Caco-2 (cell line): ENCODE measurements at regions of chr1 and their contacts with region 1.

Region 1: GRCh38 chr1:203702130-203702577 is 62.8 kb upstream of the LAX1 start:
- DNase-seq: peak; percentile 48 to 68
- H3K4me3 ChIP-seq: no peak overlapping the region
- H3K4me3 Mint-ChIP-seq: no peak overlapping the region
- H3K27ac Mint-ChIP-seq: no peak overlapping the region
- H3K4me1 ChIP-seq: no peaks in the 10 kb centered on the region
- H3K4me1 Mint-ChIP-seq: peaks cover 6% of the 10 kb centered on the region
- H3K27me3 ChIP-seq: no peaks in the 10 kb centered on the region
- H3K27me3 Mint-ChIP-seq: no peaks in the 10 kb centered on the region
- CTCF ChIP-seq: peak; percentile 74 to 93

Region 2: DNA sequence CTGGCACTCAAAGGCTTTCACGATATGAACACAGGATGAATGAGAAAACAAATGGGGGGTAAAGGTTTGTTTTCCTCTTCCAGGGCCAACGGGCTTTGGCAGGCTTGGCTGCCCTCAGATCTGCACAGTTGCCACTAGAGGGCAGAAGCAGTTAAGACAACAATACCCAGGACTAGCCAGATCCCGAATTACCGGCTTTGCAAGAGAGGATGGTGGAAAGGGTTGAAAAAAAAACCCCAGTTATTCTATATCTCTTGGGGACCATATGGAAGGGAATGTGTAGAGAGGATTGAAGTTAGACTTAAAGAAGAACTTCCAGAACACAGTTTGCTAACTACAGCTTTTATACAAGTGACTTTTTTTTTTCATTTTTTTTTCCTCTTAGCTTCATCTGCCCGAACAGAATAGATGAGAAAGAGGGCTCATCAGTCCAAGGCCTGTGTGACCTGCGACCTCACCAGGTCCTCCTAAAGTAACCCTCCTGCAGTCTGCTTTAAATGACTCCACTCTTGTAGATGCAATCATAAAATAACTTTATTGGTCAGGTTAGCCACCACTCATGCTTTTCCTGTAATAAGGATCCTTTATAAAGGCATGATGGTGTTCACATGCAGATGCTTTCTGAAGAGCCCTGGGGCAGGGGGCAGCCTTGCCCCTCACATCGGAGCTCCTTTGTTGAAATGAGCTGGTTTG is 361.9 kb before region 1 on chr1:
- CTCF ChIA-PET with region 1: interaction called, 5 read pairs
- POLR2A ChIA-PET with region 1: no interaction called
- intact Hi-C with region 1: loop called (anchors 2 kb)
- DNase-seq: peak; percentile 81 to 83
- H3K4me3 ChIP-seq: no peak overlapping the region
- H3K4me3 Mint-ChIP-seq: no peak overlapping the region
- H3K27ac Mint-ChIP-seq: no peak overlapping the region
- H3K4me1 ChIP-seq: peaks cover 5% of the 10 kb centered on the region; the same call in 1 of the 2 replicates
- H3K4me1 Mint-ChIP-seq: peaks cover 6% of the 10 kb centered on the region
- H3K27me3 ChIP-seq: no peaks in the 10 kb centered on the region
- H3K27me3 Mint-ChIP-seq: no peaks in the 10 kb centered on the region
- CTCF ChIP-seq: peak; percentile 90

Region 3: DNA sequence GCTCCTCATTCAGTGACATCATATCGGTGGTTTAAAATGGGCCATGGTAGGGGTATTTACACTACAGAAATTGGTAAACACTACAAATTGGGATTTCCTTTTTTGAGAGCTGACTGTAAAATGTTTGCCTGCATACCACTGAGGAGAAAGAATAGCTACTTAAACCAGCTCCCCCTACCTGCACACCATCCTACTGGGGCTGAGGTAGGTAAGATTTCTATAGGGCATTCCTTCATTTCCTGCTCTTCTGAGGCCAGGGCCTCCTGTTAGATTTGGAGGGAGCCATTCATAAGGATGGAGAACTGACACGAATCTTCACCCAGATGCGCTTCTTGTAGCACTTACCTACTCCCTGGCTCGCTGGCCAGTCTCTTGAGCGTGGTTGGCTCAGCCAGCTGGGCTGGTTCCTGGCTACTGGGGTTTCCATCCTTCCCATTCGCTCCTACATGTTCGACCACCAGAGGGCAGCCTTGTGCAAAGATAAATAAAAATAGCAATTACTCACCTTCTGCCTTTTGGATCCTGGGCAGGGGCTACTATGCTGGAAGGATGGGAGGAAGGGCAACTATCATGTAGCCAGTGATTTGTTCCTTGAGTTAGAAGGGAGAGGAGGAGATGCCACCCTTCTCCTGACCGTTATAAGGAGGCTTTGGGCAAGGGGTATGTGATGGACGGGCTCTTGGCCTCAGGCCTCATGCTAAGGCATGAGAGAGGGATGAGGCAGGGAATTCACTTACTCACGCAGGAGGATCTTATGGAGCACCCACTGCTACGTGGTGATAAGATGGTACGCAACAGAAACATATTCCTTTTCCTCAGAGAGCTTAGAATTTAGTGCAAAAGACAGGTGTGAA is 197.5 kb before region 1 on chr1:
- CTCF ChIA-PET with region 1: interaction called, 35 read pairs
- POLR2A ChIA-PET with region 1: no interaction called
- intact Hi-C with region 1: loop called (anchors 1 kb)
- DNase-seq: peak; percentile 77 to 87
- H3K4me3 ChIP-seq: no peak overlapping the region
- H3K4me3 Mint-ChIP-seq: no peak overlapping the region
- H3K27ac Mint-ChIP-seq: no peak overlapping the region
- H3K4me1 ChIP-seq: peaks cover 9% of the 10 kb centered on the region; the same call in 1 of the 2 replicates
- H3K4me1 Mint-ChIP-seq: peaks cover 10% of the 10 kb centered on the region
- H3K27me3 ChIP-seq: no peaks in the 10 kb centered on the region
- H3K27me3 Mint-ChIP-seq: peaks cover 9% of the 10 kb centered on the region
- CTCF ChIP-seq: peak; percentile 68 to 77

Region 4: DNA sequence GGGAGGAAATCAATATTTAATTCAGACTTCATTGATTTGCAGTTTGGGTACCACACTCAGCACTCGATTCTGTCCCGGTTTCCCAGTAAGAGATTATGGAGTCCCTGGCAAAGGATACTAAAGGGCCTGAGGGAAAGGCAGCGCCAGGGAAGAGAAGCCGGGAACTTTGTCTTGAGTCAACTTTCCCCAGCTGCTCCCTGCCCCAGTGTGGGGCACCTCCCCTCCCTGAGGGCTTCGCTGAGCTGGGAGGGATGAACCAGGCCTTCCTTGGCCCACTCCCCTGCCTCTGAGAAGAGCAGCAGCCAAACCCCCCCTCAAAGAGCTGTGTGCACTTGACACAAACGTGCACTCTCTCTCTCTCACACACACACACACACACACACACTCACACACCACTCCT is 175.6 kb before region 1 on chr1:
- CTCF ChIA-PET with region 1: no interaction called
- POLR2A ChIA-PET with region 1: no interaction called
- intact Hi-C with region 1: no loop called
- DNase-seq: no peak
- H3K4me3 ChIP-seq: no peak overlapping the region
- H3K4me3 Mint-ChIP-seq: no peak overlapping the region
- H3K27ac Mint-ChIP-seq: peak overlapping the region; percentile 5
- H3K4me1 ChIP-seq: no peaks in the 10 kb centered on the region
- H3K4me1 Mint-ChIP-seq: peaks cover 9% of the 10 kb centered on the region
- H3K27me3 ChIP-seq: no peaks in the 10 kb centered on the region
- H3K27me3 Mint-ChIP-seq: no peaks in the 10 kb centered on the region
- CTCF ChIP-seq: no peak

Region 5: DNA sequence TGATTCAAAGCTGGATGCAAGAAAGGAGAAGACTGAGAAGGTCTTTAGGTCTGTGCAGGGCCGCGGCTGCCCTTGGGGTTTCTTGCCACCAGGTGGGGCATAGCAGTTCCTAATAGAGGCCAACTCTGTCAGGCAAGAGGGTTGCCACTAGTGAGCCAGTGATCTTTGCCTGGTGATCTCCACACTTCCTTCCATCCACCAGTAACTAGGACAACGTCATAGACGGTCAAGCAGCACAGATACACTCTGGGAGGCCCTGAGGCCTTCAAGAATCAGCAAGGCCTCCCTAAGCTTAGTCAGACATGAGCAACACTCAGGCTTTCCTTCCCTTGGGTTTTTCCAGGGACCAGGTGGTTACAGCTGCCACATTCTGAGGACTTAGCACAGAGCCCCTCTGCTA is 108.4 kb before region 1 on chr1:
- CTCF ChIA-PET with region 1: interaction called, 3 read pairs
- POLR2A ChIA-PET with region 1: no interaction called
- intact Hi-C with region 1: loop called (anchors 1 kb)
- DNase-seq: peak in 1 of 2 experiments; percentile 40
- H3K4me3 ChIP-seq: no peak overlapping the region
- H3K4me3 Mint-ChIP-seq: no peak overlapping the region
- H3K27ac Mint-ChIP-seq: no peak overlapping the region
- H3K4me1 ChIP-seq: no peaks in the 10 kb centered on the region; the same call in 1 of the 2 replicates
- H3K4me1 Mint-ChIP-seq: peaks cover 7% of the 10 kb centered on the region
- H3K27me3 ChIP-seq: no peaks in the 10 kb centered on the region
- H3K27me3 Mint-ChIP-seq: no peaks in the 10 kb centered on the region
- CTCF ChIP-seq: peak in 1 of 2 experiments; percentile 52

Region 6: DNA sequence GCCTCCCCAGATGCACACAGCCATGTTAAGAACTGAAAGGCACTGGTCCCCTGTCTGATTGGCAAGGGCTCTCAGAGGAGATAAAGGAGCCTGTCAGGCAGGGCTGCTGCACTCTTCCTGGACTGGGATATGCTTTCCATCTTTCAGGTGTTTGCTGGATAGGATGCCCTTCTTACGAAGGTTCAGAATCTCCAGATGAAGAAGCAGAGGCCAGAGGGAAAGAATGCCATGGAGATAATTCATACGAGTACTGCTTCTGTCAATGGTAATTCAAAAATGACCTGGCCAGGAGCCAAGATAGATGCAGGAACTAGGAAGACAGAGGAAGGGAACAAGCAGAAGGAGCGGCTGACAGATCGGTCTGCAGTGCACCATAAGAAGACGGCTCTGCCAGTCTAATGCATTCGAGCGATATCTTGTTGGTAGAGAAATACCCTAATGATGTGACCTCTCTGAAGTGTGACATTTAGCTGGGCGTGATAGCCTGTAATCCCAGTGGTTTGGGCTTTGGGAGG is 92.1 kb before region 1 on chr1:
- CTCF ChIA-PET with region 1: no interaction called
- POLR2A ChIA-PET with region 1: no interaction called
- intact Hi-C with region 1: loop called (anchors 5 kb)
- DNase-seq: no peak
- H3K4me3 ChIP-seq: no peak overlapping the region
- H3K4me3 Mint-ChIP-seq: no peak overlapping the region
- H3K27ac Mint-ChIP-seq: no peak overlapping the region
- H3K4me1 ChIP-seq: no peaks in the 10 kb centered on the region
- H3K4me1 Mint-ChIP-seq: no peaks in the 10 kb centered on the region
- H3K27me3 ChIP-seq: no peaks in the 10 kb centered on the region
- H3K27me3 Mint-ChIP-seq: no peaks in the 10 kb centered on the region
- CTCF ChIP-seq: no peak

Region 7: GRCh38 chr1:203625628-203626019 is 76.5 kb before region 1 on chr1:
- CTCF ChIA-PET with region 1: no interaction called
- POLR2A ChIA-PET with region 1: no interaction called
- intact Hi-C with region 1: loop called (anchors 5 kb)
- DNase-seq: peak; percentile 53 to 66
- H3K4me3 ChIP-seq: no peak overlapping the region
- H3K4me3 Mint-ChIP-seq: peak overlapping the region; percentile 82
- H3K27ac Mint-ChIP-seq: peak overlapping the region; percentile 89
- H3K4me1 ChIP-seq: peaks cover 39% of the 10 kb centered on the region
- H3K4me1 Mint-ChIP-seq: peaks cover 45% of the 10 kb centered on the region
- H3K27me3 ChIP-seq: no peaks in the 10 kb centered on the region
- H3K27me3 Mint-ChIP-seq: no peaks in the 10 kb centered on the region
- CTCF ChIP-seq: peak in 1 of 2 experiments; percentile 15

Region 8: DNA sequence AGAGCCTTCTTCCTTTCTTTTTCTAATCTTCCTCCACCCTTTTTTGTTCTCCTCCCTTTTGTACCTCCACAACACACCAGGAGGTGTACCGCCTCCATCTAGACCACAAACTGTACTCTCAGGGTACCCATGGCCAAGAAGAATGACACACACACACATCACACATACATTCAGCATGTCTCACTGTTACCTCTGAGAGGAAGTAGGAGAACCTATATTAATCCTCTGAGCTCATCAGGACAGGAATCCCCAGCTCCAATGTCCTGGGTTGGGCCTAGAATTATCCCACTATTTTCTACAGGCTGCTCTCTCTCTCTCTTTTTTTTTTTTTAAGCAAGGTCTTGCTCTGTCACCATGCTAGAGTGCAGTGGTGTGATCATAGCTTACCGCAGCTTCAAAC is 38.9 kb before region 1 on chr1:
- CTCF ChIA-PET with region 1: no interaction called
- POLR2A ChIA-PET with region 1: no interaction called
- intact Hi-C with region 1: no loop called
- DNase-seq: no peak
- H3K4me3 ChIP-seq: no peak overlapping the region
- H3K4me3 Mint-ChIP-seq: no peak overlapping the region
- H3K27ac Mint-ChIP-seq: no peak overlapping the region
- H3K4me1 ChIP-seq: peaks cover 10% of the 10 kb centered on the region; the same call in 1 of the 2 replicates
- H3K4me1 Mint-ChIP-seq: peaks cover 11% of the 10 kb centered on the region
- H3K27me3 ChIP-seq: no peaks in the 10 kb centered on the region
- H3K27me3 Mint-ChIP-seq: no peaks in the 10 kb centered on the region
- CTCF ChIP-seq: no peak

Region 9: DNA sequence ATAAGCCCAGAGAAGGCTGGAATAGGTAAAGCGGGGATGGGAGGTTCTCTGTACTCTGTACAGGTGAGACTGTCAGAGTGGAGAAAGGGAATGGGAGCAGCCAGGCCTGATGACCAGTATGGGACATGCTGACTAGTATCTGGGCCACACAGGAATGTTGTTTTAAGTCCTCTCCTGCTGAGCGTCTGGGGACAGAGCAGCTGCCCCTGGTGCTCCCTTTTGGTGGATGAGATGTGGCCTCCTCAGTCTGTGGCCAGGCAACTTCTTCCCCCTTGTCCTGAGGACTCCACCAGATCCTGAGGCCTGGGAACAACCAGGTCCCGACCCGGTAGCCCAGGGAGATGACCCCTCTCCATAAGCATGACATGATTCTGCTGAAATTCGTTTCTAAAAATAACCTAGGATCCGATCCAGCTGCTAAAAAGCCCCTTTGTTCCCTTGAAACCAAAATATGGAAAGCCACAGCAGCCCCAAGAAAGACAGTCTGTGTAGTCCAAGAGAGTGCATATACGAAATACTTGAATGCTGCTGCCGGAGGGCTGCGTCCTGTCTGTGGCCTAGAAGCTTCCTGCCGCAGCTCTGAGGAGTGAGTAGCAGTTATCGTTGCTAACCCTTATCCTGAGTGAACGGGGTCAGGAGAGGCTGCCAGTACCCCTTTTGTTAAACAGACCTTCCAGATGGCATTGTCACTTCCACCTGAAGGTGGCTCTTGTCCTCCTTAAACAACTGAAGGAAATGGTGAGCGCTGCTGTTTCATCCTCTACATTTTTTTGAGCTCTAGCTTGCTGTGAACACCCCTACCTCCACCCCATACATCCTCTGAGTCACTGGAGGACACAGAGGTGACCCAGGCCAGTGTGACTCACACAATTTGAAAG is 28.4 kb before region 1 on chr1:
- CTCF ChIA-PET with region 1: interaction called, 12 read pairs
- POLR2A ChIA-PET with region 1: no interaction called
- intact Hi-C with region 1: no loop called
- DNase-seq: peak; percentile 47 to 61
- H3K4me3 ChIP-seq: no peak overlapping the region
- H3K4me3 Mint-ChIP-seq: no peak overlapping the region
- H3K27ac Mint-ChIP-seq: peak overlapping the region; percentile 55
- H3K4me1 ChIP-seq: peaks cover 10% of the 10 kb centered on the region
- H3K4me1 Mint-ChIP-seq: peaks cover 8% of the 10 kb centered on the region
- H3K27me3 ChIP-seq: no peaks in the 10 kb centered on the region
- H3K27me3 Mint-ChIP-seq: no peaks in the 10 kb centered on the region
- CTCF ChIP-seq: peak in 1 of 2 experiments; percentile 26